Panc1 (cell line): ENCODE measurements at regions of chr10 and their contacts with region 1.

Region 1: DNA sequence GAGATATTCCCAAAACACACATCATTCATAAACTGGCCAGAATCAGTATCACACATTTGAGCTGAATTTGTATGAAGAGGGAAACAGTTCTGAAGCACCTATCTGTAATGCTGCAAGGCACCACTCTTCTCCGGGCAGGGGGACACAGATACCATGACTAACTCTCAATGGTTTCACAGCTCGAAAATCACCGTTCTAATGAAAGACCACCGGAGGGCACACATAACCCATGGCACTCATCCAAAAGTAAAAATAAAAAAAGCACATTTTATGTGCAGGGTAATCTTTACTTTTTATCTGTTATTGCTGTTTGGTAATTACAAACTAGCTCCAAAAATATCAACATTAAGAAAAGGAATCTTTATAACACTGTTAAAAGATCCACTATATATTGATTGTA is 137.5 kb downstream of the PARD3 start:
- DNase-seq: no peak
- ATAC-seq: no peak
- H3K4me3 ChIP-seq: no peak overlapping the region
- H3K27ac ChIP-seq: no peak overlapping the region
- H3K4me1 ChIP-seq: no peaks in the 10 kb centered on the region
- H3K27me3 ChIP-seq: no peaks in the 10 kb centered on the region
- CTCF ChIP-seq: peak; percentile 7; the same call in 1 of the 2 replicates

Region 2: DNA sequence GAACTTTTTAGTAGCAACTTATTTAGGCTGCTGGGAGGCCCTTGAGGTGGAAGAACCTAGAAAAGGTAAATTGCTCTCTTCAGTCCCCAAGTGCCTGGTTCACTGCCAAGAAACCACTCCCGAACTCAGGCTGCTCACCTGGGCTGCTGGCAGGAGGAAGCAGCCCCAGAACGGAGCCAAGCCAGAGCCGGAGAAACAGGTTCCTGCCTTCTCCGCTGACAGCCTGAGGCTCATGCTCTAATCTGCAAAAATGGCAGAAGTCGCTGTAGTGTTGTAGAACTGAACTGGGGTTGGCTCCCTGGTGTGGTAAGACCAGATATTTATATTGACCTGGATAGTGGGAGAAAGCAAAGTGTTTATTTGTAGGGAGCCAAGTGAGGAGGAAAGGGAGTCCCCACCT is 276.6 kb after region 1 on chr10:
- CTCF ChIA-PET with region 1: interaction called, 4 read pairs
- POLR2A ChIA-PET with region 1: interaction called, 13 read pairs
- in situ Hi-C with region 1: no loop called
- intact Hi-C with region 1: no loop called
- DNase-seq: no peak
- ATAC-seq: no peak
- H3K4me3 ChIP-seq: no peak overlapping the region
- H3K27ac ChIP-seq: no peak overlapping the region
- H3K4me1 ChIP-seq: no peaks in the 10 kb centered on the region
- H3K27me3 ChIP-seq: no peaks in the 10 kb centered on the region
- CTCF ChIP-seq: no peak

Region 3: DNA sequence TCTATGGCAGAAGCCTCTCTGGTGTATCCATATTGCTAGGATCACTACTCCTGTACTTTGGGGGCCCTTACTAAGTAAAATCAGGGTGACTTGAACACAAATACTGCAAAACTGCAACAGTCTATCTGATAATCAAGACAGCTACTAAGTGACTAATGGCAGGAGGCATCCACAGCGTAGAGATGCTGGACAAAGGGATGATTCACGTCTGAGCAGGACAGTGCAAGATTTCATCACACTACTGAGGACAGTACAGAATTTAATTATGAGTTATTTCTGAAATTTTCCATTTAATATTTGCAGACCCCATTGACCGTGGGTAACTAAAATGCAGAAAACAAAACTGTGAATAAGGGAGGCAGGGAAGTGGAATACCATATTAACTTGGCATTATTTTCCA is 402.2 kb after region 1 on chr10:
- CTCF ChIA-PET with region 1: no interaction called
- POLR2A ChIA-PET with region 1: no interaction called
- in situ Hi-C with region 1: no loop called
- intact Hi-C with region 1: no loop called
- DNase-seq: no peak
- ATAC-seq: no peak
- H3K4me3 ChIP-seq: no peak overlapping the region
- H3K27ac ChIP-seq: no peak overlapping the region
- H3K4me1 ChIP-seq: no peaks in the 10 kb centered on the region
- H3K27me3 ChIP-seq: no peaks in the 10 kb centered on the region
- CTCF ChIP-seq: no peak